MCF 10A (cell line): ENCODE measurements at regions of chr1 and their contacts with region 1.

Region 1: DNA sequence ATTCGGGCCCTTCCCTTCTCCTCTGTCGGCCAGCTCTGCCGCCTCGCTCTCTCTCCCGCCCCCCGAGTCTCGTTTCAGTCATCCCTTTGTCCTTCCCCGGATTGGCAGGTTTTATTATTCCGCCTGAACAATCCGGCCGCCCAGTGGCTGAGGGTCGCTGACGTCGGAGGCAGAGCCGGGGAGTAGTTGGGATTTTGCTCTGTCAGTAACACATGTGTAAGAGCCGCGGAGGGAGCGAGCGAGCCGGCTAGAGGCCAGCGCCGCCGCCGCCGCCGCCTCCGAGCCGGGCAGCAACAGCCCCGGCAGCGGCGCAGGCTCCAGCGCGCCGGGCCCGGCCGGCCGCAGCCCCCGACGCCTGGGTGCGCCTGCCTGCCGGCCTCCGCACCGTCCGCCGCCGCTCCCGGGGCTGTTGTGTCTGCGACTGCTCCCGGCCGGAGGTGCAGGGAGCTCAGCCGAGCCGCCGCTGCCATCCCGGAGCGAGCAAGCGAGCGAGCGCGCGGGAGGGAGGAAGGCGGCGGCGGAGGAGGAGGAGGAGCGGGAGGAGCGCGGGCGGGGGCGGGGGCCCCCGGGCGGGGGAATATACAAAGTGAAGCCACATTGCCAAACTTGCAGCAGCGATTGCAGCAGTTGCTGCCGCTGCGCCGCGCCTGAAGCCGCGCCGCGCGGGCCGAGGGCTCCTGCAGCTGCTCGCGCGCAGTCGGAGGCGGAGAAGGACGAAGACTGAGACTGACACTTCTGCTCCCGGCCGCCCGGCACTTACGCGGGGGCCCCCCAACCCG is at the start of gene LMO4:
- DNase-seq: peak; percentile 98
- H3K4me3 Mint-ChIP-seq: peak within 1 kb of the TSS; percentile 87
- H3K27ac Mint-ChIP-seq: peak within 1 kb of the TSS; percentile 88
- H3K4me1 Mint-ChIP-seq: peaks cover 21% of the 10 kb centered on the region
- H3K27me3 Mint-ChIP-seq: no peaks in the 10 kb centered on the region
- CTCF ChIP-seq: no peak
- total RNA-seq, gene LMO4: 23.4 and 29.4 TPM in 2 replicates

Region 2: DNA sequence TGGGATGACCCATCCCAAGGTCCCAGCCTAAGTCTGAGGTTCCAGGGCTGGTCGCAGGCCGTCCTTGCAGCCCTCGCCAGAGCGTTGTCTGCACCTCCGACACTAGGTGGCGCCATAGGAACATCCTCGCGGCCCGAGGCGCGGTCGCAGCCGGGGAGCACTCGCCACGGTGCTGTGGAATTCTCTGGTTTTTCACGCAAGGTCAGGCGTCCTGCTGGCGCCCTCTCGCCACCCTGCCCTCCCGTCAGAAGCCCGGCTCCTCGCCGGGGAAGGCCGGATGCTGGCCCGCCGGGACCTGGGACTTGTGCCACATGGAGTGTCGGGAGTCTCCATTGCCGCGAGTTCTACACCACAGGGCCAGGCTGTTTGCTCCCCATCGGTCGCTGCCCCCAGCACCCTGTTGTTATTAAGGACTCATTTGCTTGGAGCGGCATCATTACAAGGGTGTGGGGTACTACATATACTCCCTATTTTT is 196.6 kb before region 1 on chr1:
- CTCF ChIA-PET with region 1: interaction called, 5 read pairs
- POLR2A ChIA-PET with region 1: interaction called, 3 read pairs
- intact Hi-C with region 1: loop called (anchors 2 kb)
- DNase-seq: peak; percentile 72
- H3K4me3 Mint-ChIP-seq: peak overlapping the region; percentile 66
- H3K27ac Mint-ChIP-seq: no peak overlapping the region
- H3K4me1 Mint-ChIP-seq: peaks cover 5% of the 10 kb centered on the region
- H3K27me3 Mint-ChIP-seq: no peaks in the 10 kb centered on the region
- CTCF ChIP-seq: peak; percentile 91

Region 3: GRCh38 chr1:87318056-87318650 is 10.3 kb before region 1 on chr1:
- CTCF ChIA-PET with region 1: interaction called, 13 read pairs
- POLR2A ChIA-PET with region 1: no interaction called
- intact Hi-C with region 1: no loop called
- DNase-seq: no peak
- H3K4me3 Mint-ChIP-seq: no peak overlapping the region
- H3K27ac Mint-ChIP-seq: no peak overlapping the region
- H3K4me1 Mint-ChIP-seq: no peaks in the 10 kb centered on the region
- H3K27me3 Mint-ChIP-seq: peaks cover 22% of the 10 kb centered on the region
- CTCF ChIP-seq: no peak

Region 4: DNA sequence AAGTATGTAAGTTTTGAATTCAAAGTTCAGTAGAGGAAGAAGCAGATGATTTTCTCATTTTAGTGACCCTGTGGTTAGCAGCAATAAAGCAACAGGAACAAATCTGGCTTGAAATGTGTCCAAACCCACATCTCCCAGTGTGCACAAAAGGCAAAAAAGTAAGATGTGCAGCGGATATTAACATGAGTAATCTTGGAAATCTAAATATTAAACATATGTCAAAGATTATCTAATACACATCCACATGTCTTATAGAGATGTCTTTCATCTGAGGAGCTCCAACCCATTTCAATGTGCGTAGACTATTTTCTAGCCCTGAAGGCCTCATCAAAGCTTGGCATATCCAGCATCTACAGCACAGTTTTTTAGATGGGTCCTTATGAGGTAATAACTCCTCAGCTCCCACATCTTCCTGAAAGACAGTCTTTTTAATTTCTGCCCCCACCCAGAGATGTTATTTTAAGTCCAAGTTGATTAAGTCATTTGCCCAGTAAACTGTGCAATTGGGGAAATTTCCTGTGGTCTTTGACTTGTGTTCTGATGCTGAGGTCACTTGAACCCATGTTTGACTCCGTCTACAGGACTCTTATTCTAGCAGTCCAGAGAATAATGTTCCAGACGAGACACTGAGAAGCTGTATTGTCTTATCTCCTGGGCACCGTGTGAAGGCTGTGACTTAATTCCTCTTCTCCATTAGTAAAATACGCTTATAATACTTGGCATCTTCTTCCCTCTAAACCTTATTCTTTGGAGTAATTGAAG is 74.0 kb after region 1 on chr1:
- CTCF ChIA-PET with region 1: interaction called, 8 read pairs
- POLR2A ChIA-PET with region 1: interaction called, 15 read pairs
- intact Hi-C with region 1: loop called (anchors 5 kb)
- DNase-seq: no peak
- H3K4me3 Mint-ChIP-seq: no peak overlapping the region
- H3K27ac Mint-ChIP-seq: no peak overlapping the region
- H3K4me1 Mint-ChIP-seq: peaks cover 22% of the 10 kb centered on the region
- H3K27me3 Mint-ChIP-seq: no peaks in the 10 kb centered on the region
- CTCF ChIP-seq: no peak

Region 5: DNA sequence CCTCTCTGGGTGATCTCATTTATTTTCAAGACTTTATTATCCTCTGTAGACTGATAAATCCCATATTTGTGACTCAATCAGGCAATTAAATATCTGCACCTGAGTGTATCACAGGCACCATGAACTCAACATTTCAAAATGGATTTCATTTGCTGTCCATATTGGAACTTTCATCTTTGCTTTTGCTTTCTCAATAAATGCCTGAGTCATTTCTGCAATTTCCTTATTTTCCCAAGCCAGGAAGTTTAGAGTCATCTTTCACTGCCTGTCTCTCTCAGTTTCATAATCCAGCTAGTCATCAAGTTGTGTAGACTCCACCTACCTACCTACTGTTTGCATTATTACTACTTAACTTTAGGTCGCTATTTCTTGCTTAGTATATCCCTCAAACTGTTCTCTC is 541.1 kb after region 1 on chr1:
- CTCF ChIA-PET with region 1: interaction called, 5 read pairs
- POLR2A ChIA-PET with region 1: interaction called, 12 read pairs
- intact Hi-C with region 1: loop called (anchors 1 kb)
- DNase-seq: peak; percentile 86
- H3K4me3 Mint-ChIP-seq: peak overlapping the region; percentile 33
- H3K27ac Mint-ChIP-seq: peak overlapping the region; percentile 95
- H3K4me1 Mint-ChIP-seq: peaks cover 31% of the 10 kb centered on the region
- H3K27me3 Mint-ChIP-seq: no peaks in the 10 kb centered on the region
- CTCF ChIP-seq: no peak